ENCODE measurements at regions of chr15 and their contacts with region 1.

Region 1: GRCh38 chr15:76206325-76206976 is 104.8 kb downstream of the ETFA start:
- DNase-seq: peak; percentile 46
- H3K4me3 ChIP-seq: no peak overlapping the region
- CTCF ChIP-seq: no peak

Region 2: DNA sequence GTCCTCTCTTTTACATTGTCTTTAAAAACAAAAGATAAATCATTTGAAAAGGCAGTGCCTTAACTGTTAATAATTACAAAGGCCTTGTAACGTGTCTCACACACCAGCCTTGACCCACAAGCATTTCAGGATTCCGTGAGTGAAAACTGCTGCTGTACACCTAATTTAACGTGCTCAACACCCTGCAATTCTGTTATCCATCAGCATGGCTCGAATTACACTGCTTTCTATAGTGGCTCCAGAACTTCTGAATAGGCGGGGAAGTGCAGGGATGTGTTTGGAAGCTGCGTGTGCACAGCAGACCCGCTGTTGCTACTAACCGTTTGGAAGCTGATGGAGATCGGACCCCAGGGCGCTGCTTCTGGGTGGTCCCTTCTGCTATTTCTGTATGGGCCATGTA is 114.7 kb after region 1 on chr15:
- in situ Hi-C with region 1: no loop called
- DNase-seq: no peak
- H3K4me3 ChIP-seq: no peak overlapping the region
- CTCF ChIP-seq: no peak

Region 3: DNA sequence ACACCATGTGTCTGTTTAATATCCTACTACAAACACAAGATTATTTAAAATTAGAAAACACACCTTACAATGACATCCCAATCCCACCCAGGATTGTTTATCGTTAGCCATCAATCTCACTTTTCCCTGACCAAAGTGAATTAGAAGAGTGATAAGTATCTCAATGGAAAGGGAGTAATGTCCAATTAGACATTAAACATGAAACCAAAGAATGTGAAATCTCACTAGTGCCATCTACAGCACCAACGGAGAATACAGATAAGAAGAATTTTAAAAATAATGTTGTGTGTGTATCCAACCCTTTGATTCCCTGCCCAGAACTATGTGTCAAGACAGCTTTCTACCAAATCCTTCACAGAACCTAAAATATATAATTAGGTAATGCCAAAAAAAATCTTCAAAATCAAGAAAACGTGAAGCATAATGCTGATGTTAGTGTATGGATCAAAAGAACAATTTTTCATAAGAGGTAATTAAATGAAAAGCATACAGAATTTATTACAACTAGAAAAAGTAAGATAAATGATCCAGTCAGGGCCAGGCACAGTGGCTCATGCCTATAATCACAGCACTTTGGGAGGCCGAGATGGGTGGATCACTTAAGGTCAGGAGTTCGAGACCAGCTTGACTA is 634.5 kb after region 1 on chr15:
- in situ Hi-C with region 1: loop called (anchors 25 kb)
- DNase-seq: peak; percentile 27
- H3K4me3 ChIP-seq: no peak overlapping the region
- CTCF ChIP-seq: peak; percentile 43